ENCODE measurements at regions of chr16 and their contacts with region 1.

Region 1: GRCh38 chr16:71412270-71413160 is 29.3 kb downstream of the TLE7 start:
- DNase-seq: peak; percentile 83

Region 2: DNA sequence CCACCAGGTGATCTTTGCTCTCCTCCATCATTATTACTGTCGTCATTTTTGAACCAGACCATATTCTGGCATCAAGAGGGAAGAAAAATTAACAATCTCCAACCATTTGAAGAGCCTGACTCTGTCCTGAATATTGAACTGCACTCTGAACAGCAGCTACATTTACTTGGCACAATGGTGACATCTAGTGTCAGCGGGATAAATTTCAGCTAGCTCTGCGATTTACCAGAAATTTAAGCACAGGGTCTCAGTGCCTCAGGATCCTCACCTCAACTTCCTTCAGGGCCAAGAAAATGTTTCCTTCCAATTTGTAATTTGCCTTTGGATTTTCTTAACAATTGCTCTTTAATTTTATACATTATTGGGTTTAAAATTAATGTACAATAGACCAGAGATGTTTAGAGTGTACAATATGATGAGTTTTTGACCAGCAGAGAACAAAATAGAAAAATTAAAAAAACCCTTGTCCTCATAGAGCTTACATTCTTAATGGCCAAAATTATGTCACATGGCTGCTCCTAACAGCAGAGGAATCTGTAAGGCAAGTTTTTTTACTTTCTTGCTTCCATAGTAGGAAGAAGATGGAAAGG is 87.4 kb after region 1 on chr16:
- intact Hi-C with region 1: loop called (anchors 2 to 5 kb)
- DNase-seq: no peak

Region 3: GRCh38 chr16:71610936-71611871 is 198.7 kb after region 1 on chr16:
- intact Hi-C with region 1: loop called in 1 of 2 experiments (anchors 10 kb)
- DNase-seq: peak; percentile 86